Activated CD4-positive, alpha-beta T cell treated with anti-CD3 and anti-CD28 coated beads for 36 hours (primary cell): ENCODE measurements at regions of chr12 and their contacts with region 1.

Region 1: GRCh38 chr12:121917979-121918678 is at the start of gene CFAP251:
- DNase-seq: peak; percentile 99
- ATAC-seq: peak; percentile 99
- H3K4me3 Mint-ChIP-seq: peak within 1 kb of the TSS; percentile 54
- H3K27ac Mint-ChIP-seq: peak within 1 kb of the TSS; percentile 74
- H3K4me1 Mint-ChIP-seq: peaks cover 15% of the 10 kb centered on the region
- H3K27me3 Mint-ChIP-seq: no peaks in the 10 kb centered on the region
- total RNA-seq, gene CFAP251: 0.59 to 0.65 TPM

Region 2: DNA sequence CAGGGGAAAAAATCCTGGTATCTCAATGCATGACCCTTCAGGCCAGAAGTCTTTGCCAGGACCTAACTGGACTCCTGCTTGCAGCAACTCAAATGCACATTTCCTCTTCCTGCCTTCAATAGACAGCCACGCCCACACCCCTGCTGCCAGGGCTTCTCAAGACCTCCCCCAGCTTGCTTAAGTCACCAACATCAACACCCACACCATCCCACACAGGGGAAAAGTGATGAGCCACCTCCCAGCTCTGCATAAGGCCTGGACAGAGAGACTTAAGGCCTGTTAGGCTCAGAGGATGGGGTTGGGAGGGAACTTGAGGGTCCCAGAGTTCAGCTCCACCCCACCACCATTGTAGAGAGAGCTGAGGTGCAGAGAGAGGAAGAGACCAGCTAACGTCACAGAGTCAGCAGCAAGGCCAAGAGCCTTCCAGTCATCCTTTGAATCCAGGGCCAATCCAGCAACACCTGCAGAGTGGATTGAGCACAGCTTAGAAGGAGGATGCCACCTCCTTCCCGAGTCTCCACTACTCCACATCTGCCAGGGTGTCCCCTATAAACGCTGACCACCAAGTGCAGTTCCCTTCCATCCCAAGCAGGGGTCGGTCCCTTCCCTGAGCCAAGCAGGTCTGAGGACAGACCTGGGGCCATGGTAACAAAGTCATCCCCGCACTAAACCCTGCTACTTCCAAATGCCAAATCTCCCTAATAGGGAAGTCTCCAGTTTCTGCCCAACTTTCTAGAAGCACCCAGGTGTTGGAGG is 387.4 kb before region 1 on chr12:
- CTCF ChIA-PET with region 1: no interaction called
- POLR2A ChIA-PET with region 1: no interaction called
- intact Hi-C with region 1: no loop called
- DNase-seq: peak; percentile 81
- ATAC-seq: peak; percentile 69
- H3K4me3 Mint-ChIP-seq: no peak overlapping the region
- H3K27ac Mint-ChIP-seq: peak overlapping the region; percentile 88
- H3K4me1 Mint-ChIP-seq: peaks cover 41% of the 10 kb centered on the region
- H3K27me3 Mint-ChIP-seq: no peaks in the 10 kb centered on the region

Region 3: DNA sequence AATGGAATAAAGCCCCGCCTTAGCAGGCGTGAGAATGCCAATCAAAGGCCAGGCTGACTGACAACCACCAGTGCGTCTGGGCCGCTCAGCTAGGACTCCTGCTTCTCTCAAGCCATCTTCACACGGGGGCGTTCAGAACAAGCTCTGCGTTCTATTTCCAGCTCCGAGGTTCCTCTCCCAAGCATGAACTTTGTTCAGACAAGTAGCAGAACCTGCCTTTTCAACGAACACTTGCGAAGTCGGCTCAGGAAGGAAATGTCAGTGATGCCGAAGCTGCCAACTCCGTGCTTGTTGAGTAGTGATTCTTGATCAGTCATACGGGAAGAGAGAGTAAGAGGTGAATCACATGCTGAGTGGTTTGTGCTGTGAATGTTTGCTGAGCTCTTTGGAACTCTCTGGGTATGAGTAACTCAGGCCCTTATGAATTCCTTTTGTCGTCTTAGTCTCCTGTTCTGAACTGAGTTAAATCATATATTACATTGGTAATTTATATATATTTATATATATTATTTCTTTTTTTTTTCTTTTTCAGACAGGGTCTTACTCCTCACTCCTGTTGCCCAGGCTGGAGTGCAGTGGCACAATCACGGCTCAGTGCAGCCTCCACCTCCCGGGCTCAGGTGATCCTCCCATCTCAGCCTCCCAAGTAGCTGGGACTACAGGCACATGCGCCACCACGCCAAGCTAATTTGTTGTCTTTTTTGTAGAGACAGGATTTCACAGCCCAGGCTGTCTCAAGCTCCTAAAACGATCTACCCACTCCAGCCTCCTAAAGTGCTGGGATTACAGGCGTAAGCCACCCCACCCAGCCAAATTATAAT is 74.1 kb after region 1 on chr12:
- CTCF ChIA-PET with region 1: interaction called, 14 read pairs
- POLR2A ChIA-PET with region 1: interaction called, 4 read pairs
- intact Hi-C with region 1: loop called (anchors 1 kb)
- DNase-seq: peak; percentile 84
- ATAC-seq: peak; percentile 100
- H3K4me3 Mint-ChIP-seq: peak overlapping the region; percentile 30
- H3K27ac Mint-ChIP-seq: peak overlapping the region; percentile 83
- H3K4me1 Mint-ChIP-seq: peaks cover 23% of the 10 kb centered on the region
- H3K27me3 Mint-ChIP-seq: peaks cover 5% of the 10 kb centered on the region

Region 4: DNA sequence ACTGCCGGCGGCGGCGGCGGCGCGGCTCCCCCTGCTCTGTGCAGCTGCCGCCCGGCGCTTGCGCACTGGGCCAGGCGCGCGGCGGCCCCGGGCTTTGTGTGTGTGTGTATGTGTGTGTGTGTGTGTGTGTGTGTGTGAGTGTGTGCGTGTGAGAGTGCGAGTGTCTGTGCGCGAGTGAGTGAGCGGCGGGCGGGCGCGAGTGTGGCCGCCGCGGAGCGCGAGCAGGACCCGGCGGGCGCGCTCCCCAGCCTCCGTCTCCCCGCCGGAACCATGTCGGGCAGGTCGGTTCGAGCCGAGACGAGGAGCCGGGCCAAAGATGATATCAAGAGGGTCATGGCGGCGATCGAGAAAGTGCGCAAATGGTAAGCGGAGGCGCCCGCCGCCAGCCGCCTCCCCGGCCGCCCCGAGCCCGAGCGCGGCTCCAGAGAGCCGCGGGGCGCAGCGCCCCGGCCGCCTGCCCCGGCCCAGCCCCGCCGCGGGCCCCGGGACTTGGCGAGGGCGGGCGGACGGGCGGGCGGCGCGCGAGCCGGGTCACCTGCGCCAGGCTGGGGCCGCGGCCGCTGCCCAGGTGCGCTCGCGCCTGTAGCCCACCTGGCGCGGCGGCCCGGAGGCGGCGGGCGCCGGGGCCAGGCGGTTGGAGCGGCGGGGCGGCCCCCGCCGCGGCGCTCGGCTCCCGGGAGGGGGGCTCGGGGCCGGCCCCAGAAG is 103.8 kb after region 1 on chr12 and contains the start of gene BCL7A:
- CTCF ChIA-PET with region 1: interaction called, 7 read pairs
- POLR2A ChIA-PET with region 1: no interaction called
- intact Hi-C with region 1: loop called (anchors 1 to 2 kb)
- DNase-seq: peak; percentile 75
- ATAC-seq: peak; percentile 83
- H3K4me3 Mint-ChIP-seq: peak within 1 kb of the TSS; percentile 85
- H3K27ac Mint-ChIP-seq: peak within 1 kb of the TSS; percentile 78
- H3K4me1 Mint-ChIP-seq: peaks cover 5% of the 10 kb centered on the region
- H3K27me3 Mint-ChIP-seq: peaks cover 13% of the 10 kb centered on the region
- total RNA-seq, gene BCL7A: 6.4 to 6.6 TPM

Region 5: DNA sequence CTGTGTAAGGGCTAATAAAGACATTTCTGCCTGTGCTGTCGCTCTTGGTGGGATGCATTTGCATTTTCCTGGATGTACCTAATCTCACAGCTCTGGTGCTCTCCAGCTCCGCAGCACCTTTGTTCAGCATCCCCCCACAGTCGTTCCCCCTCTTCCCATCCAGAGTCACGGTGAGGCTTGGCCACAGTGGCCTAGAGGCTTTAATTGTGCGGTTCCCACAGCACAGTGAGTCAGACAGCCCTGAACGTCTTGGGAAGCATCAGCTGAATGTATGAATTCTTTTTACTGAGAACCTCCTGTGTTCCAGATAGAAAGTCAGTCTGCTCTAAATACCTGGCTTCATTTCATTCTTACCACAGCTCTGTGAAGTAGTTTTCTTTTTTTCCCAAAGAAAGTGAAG is 189.1 kb after region 1 on chr12:
- CTCF ChIA-PET with region 1: interaction called, 4 read pairs
- POLR2A ChIA-PET with region 1: no interaction called
- intact Hi-C with region 1: loop called (anchors 5 to 10 kb)
- DNase-seq: no peak
- ATAC-seq: no peak
- H3K4me3 Mint-ChIP-seq: no peak overlapping the region
- H3K27ac Mint-ChIP-seq: peak overlapping the region; percentile 63
- H3K4me1 Mint-ChIP-seq: peaks cover 82% of the 10 kb centered on the region
- H3K27me3 Mint-ChIP-seq: no peaks in the 10 kb centered on the region

Region 6: GRCh38 chr12:122123051-122123760 is 205.1 kb after region 1 on chr12:
- CTCF ChIA-PET with region 1: interaction called, 5 read pairs
- POLR2A ChIA-PET with region 1: no interaction called
- intact Hi-C with region 1: loop called in 1 of 2 experiments (anchors 2 kb)
- DNase-seq: peak; percentile 84
- ATAC-seq: peak; percentile 81
- H3K4me3 Mint-ChIP-seq: no peak overlapping the region
- H3K27ac Mint-ChIP-seq: peak overlapping the region; percentile 85
- H3K4me1 Mint-ChIP-seq: peaks cover 34% of the 10 kb centered on the region
- H3K27me3 Mint-ChIP-seq: no peaks in the 10 kb centered on the region

Region 7: DNA sequence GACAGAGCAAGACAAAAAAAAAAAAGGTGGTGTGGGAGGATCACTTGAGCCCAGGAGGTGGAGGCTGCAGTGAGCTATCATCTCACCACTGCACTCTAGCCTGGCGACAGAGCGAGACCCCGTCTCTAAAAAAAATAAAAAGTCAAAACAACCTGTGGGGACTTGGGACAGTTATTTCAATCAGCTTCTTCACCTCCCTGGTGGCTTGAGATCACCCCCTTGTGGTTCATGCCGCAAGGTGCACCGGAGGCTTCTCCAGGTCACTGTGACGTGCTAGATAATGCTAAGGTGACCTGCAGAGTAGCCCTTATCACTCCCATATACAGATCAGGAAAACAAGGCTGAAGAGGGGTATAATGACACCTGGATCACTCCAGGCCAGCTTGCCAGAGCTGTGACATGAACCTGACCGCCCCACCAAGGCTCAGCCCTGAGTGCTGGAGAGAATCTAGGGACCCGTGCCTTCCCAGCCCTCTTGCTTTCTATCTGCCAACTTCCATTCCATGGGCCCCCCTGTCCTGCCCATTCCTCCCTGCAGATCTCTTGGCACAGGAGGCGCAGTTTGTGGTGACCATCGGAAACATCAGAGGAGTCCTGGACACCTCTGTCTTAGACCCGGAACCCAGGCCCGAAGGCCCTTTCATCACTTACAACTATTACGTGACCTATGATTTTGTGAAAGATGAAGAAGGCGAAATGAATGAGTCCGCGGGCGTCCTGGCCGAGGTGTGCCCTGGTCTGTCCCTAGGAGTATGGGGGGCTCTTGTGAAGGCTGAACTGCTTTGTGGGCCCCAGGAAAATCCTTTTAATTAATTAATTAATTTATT is 272.9 kb after region 1 on chr12:
- CTCF ChIA-PET with region 1: interaction called, 5 read pairs
- POLR2A ChIA-PET with region 1: no interaction called
- intact Hi-C with region 1: loop called (anchors 5 to 10 kb)
- DNase-seq: peak; percentile 86
- ATAC-seq: peak; percentile 93
- H3K4me3 Mint-ChIP-seq: no peak overlapping the region
- H3K27ac Mint-ChIP-seq: no peak overlapping the region
- H3K4me1 Mint-ChIP-seq: no peaks in the 10 kb centered on the region
- H3K27me3 Mint-ChIP-seq: peaks cover 2% of the 10 kb centered on the region

Region 8: GRCh38 chr12:122265931-122266771 is 348.0 kb after region 1 on chr12 and contains the start of gene VPS33A:
- CTCF ChIA-PET with region 1: no interaction called
- POLR2A ChIA-PET with region 1: no interaction called
- intact Hi-C with region 1: loop called in 1 of 2 experiments (anchors 5 kb)
- DNase-seq: peak; percentile 98
- ATAC-seq: peak; percentile 86
- H3K4me3 Mint-ChIP-seq: peak within 1 kb of the TSS; percentile 97
- H3K27ac Mint-ChIP-seq: peak within 1 kb of the TSS; percentile 98
- H3K4me1 Mint-ChIP-seq: peaks cover 23% of the 10 kb centered on the region
- H3K27me3 Mint-ChIP-seq: no peaks in the 10 kb centered on the region
- total RNA-seq, gene VPS33A: 24.8 to 26.4 TPM